ENCODE measurements at regions of chr9 and their contacts with region 1.

Region 1: DNA sequence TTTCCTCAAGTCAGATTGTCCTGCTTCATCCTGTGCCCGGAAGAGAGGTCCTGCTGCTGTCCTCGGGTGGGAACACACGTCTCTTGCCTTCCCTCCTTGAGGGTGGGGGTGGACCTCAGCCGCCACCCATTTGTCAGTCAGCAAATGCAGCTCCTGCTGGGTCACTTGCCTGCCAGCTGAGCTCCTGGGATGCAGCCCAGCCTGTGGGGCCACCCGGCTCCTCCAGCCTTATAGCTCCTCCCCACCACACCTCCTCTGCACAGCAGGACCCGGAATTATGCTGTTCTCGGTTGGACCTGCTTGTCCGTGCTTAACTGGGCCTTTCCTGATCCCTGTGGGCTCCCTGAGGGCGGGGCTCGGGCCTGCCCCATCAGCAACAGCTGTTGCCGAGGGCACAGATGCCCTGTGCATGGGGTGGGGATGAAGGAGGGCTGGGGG is 52.7 kb downstream of the RXRA start:
- DNase-seq: peak; percentile 91
- H3K4me3 Mint-ChIP-seq: peak overlapping the region; percentile 40
- H3K27ac Mint-ChIP-seq: no peak overlapping the region
- H3K4me1 Mint-ChIP-seq: peaks cover 39% of the 10 kb centered on the region
- H3K27me3 Mint-ChIP-seq: no peaks in the 10 kb centered on the region
- CTCF ChIP-seq: no peak

Region 2: DNA sequence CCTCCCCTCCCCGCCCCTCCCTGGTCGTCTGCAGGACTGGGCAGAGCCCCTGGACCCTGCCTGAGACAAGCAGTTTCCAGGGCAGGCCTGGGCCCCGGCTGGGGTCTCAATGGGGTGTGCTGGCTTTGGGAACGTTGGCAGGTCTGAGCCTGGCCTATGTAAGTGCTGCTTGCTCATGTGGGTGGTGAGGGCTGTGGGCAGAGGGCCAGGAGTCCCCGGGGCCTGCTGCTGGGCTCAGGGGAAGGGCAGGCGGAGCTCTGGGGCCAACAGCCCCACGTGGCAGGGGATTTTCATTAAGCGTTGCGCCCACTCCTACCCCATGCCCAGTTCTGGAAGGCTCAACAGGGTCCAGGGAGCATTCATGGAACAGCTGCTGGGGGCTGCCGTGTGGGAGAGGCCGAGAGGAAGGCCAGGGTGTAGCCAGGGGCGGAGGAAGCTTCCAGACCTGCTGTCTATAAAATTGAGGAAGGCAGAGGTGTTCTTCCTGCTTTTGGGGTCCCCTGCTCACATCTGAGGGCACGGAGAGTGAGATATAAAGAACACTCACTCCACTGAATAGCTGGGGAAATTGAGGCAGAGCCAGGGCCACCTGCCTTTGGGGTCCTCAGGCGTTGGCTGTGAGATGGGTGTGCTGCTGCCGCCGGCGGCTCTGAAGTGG is 20.1 kb before region 1 on chr9:
- CTCF ChIA-PET with region 1: interaction called, 4 read pairs
- POLR2A ChIA-PET with region 1: interaction called, 37 read pairs
- intact Hi-C with region 1: no loop called
- DNase-seq: peak; percentile 76
- H3K4me3 Mint-ChIP-seq: peak overlapping the region; percentile 53
- H3K27ac Mint-ChIP-seq: peak overlapping the region; percentile 95
- H3K4me1 Mint-ChIP-seq: peaks cover 51% of the 10 kb centered on the region
- H3K27me3 Mint-ChIP-seq: no peaks in the 10 kb centered on the region
- CTCF ChIP-seq: no peak

Region 3: DNA sequence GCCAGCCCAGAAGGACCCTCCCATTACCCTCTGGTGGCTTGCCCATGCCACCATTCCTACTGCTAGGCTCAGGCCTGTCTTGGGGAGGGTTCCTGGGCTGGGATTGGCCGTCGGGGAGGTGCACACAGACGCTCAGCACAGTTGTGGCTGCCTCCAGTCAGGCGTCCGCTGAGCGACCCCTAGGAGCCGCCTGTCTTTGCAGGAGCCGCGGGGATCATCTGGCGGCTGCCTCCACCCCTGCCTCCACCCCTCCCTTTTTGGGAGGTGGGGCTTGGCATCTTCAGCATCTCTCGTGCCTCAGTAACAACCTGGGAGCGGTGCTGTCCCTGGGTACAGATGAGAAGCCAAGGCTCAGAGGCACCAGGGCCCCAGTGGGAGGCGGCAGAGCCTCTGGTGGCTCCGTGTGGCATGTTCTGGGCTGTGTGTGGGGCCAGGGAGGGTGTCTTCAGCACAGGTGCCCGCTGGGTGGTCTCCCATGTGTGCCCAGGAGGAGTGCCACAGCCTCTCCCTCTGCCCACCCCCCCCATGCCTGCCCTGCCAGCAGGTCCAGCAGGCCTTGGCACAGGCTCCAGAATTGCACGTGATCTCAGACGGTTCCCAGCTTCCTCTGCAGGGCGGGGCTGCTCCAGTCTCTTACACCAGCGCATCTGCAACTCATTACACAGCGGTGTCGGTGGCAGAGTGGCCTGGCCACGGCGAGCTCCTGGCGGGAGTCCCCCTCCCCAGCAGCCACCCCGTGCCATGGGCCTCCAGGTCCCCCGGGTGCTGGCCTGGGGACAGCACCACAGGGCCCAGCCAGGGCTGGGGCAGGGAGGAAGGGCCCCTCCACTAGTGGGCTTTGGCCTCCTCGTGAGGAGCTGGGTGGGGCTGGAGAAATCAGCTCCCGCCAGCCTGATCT is 12.9 kb before region 1 on chr9:
- CTCF ChIA-PET with region 1: interaction called, 5 read pairs
- POLR2A ChIA-PET with region 1: interaction called, 37 read pairs
- intact Hi-C with region 1: no loop called
- DNase-seq: peak; percentile 95
- H3K4me3 Mint-ChIP-seq: peak overlapping the region; percentile 38
- H3K27ac Mint-ChIP-seq: peak overlapping the region; percentile 69
- H3K4me1 Mint-ChIP-seq: peaks cover 35% of the 10 kb centered on the region
- H3K27me3 Mint-ChIP-seq: no peaks in the 10 kb centered on the region
- CTCF ChIP-seq: no peak

Region 4: GRCh38 chr9:134407123-134407808 is 28.3 kb after region 1 on chr9:
- CTCF ChIA-PET with region 1: no interaction called
- POLR2A ChIA-PET with region 1: interaction called, 8 read pairs
- intact Hi-C with region 1: loop called (anchors 2 kb)
- DNase-seq: peak; percentile 88
- H3K4me3 Mint-ChIP-seq: peak overlapping the region; percentile 45
- H3K27ac Mint-ChIP-seq: peak overlapping the region; percentile 49
- H3K4me1 Mint-ChIP-seq: peaks cover 27% of the 10 kb centered on the region
- H3K27me3 Mint-ChIP-seq: no peaks in the 10 kb centered on the region
- CTCF ChIP-seq: no peak

Region 5: DNA sequence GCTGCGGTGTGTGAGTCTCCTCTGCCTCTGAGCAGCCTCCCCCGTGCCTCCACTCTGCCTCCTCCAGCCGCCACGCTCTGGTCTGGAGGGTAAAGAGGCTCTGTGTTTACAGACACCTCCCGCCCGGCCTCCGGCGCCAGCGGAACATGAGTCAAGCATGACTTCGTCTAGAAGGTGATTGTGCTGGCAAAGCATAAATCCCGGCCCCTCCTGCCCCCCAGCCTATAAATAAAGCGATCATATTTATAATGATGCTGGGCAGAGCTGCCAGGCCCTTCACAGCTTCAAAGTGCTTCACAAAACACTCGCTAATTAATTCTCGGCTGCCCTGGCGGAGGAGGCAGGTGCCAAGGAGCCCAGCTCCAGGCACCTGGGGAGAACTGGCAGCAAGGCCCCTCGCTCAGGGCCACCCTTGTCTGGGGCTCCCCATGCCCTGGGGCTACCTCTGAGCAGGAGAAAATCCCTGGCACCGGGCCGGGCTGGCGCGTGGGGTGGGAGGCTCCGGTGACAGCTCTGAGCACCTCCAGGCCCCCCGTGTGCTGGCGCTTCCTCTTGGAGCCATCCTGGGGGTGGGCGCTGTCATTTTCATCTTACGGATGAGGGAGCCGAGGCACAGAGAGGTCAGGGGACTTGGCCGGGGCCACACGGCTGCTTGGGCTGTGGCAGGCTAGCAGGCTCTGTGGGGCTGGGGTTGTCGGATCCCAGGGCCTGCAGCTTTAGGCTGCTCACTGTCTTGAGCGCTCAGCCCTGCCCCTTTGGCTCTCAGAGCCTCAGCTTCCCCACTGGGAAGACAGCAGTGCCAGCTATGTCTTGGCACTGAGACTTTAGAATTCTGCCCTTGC is 35.2 kb after region 1 on chr9:
- CTCF ChIA-PET with region 1: interaction called, 3 read pairs
- POLR2A ChIA-PET with region 1: interaction called, 19 read pairs
- intact Hi-C with region 1: no loop called
- DNase-seq: peak; percentile 83
- H3K4me3 Mint-ChIP-seq: no peak overlapping the region
- H3K27ac Mint-ChIP-seq: peak overlapping the region; percentile 50
- H3K4me1 Mint-ChIP-seq: peaks cover 22% of the 10 kb centered on the region
- H3K27me3 Mint-ChIP-seq: no peaks in the 10 kb centered on the region
- CTCF ChIP-seq: no peak

Region 6: GRCh38 chr9:134434894-134435506 is 56.1 kb after region 1 on chr9:
- CTCF ChIA-PET with region 1: interaction called, 3 read pairs
- POLR2A ChIA-PET with region 1: interaction called, 21 read pairs
- intact Hi-C with region 1: loop called (anchors 5 kb)
- DNase-seq: peak; percentile 97
- H3K4me3 Mint-ChIP-seq: peak overlapping the region; percentile 33
- H3K27ac Mint-ChIP-seq: peak overlapping the region; percentile 65
- H3K4me1 Mint-ChIP-seq: peaks cover 30% of the 10 kb centered on the region
- H3K27me3 Mint-ChIP-seq: no peaks in the 10 kb centered on the region
- CTCF ChIP-seq: no peak

Measured in MCF 10A (cell line).